Heart right ventricle (tissue), 16 donors: ENCODE measurements at regions of chr12 and their contacts with region 1.

Region 1: DNA sequence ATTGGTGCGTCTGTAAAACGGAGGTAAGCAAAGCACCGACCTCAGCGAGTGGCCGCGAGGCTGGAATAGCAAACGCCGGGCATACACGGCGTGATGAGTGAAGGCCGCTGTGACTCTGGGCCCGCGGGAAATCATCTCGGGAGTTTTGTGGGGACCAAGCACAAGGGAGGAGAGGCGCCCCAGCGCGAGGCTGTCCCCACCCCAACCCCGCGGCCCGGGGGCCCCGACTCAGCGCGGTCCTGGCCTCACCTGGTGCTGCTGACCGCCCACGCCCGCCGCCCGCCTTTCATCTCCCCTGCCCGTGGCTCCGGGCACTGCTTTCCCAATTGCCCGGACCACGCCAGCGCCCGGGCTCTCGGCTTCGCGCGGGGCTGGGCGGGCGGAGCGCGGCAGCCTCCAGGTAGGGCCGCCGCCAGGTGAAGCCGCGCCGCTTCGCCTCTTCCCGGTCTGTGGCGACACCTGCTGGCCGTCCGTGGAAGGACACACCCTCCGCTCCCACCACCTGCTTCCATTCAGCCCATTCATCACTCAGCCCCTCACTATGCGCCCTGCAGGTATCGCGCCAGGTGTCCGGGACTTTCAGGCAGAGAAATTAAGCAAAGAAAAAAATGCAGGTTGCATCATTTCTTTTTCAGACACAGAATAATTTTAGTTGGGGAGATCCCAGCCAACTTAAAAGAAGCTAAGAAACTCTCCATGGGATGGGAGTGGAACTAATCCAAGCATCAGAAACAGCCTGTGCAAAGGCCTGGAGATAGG is 360.4 kb downstream of the MED13L start:
- DNase-seq: peak; percentile 37 to 68
- ATAC-seq: peak; percentile 53 to 81 (median 67)
- H3K4me3 ChIP-seq: peak overlapping the region in 1 of 10 donors; percentile 8
- H3K27ac ChIP-seq: no peak overlapping the region
- H3K4me1 ChIP-seq: peaks cover 0 to 4% (median 3%) of the 10 kb centered on the region in 9 donors
- H3K27me3 ChIP-seq: peaks cover 0 to 62% (median 50%) of the 10 kb centered on the region in 7 donors
- CTCF ChIP-seq: peak; percentile 88 to 98 (median 96)

Region 2: GRCh38 chr12:113980537-113981337 is 1936.4 kb before region 1 on chr12:
- intact Hi-C with region 1: loop called in 5 of 10 experiments (anchors 10 kb)
- DNase-seq: no peak
- ATAC-seq: peak in 6 of 8 donors; percentile 49 to 74 (median 56)
- H3K4me3 ChIP-seq: no peak overlapping the region
- H3K27ac ChIP-seq: no peak overlapping the region
- H3K4me1 ChIP-seq: no peaks in the 10 kb centered on the region
- H3K27me3 ChIP-seq: peaks cover 0 to 66% (median 41%) of the 10 kb centered on the region in 7 donors
- CTCF ChIP-seq: peak; percentile 81 to 95 (median 85)

Region 3: GRCh38 chr12:114625294-114625851 is 1291.7 kb before region 1 on chr12:
- intact Hi-C with region 1: loop called in 1 of 10 experiments (anchors 10 kb)
- DNase-seq: peak in 1 of 2 donors; percentile 19
- ATAC-seq: no peak
- H3K4me3 ChIP-seq: no peak overlapping the region
- H3K27ac ChIP-seq: no peak overlapping the region
- H3K4me1 ChIP-seq: no peaks in the 10 kb centered on the region
- H3K27me3 ChIP-seq: peaks cover 0 to 46% (median 10%) of the 10 kb centered on the region in 7 donors
- CTCF ChIP-seq: peak; percentile 28 to 73 (median 65)

Region 4: DNA sequence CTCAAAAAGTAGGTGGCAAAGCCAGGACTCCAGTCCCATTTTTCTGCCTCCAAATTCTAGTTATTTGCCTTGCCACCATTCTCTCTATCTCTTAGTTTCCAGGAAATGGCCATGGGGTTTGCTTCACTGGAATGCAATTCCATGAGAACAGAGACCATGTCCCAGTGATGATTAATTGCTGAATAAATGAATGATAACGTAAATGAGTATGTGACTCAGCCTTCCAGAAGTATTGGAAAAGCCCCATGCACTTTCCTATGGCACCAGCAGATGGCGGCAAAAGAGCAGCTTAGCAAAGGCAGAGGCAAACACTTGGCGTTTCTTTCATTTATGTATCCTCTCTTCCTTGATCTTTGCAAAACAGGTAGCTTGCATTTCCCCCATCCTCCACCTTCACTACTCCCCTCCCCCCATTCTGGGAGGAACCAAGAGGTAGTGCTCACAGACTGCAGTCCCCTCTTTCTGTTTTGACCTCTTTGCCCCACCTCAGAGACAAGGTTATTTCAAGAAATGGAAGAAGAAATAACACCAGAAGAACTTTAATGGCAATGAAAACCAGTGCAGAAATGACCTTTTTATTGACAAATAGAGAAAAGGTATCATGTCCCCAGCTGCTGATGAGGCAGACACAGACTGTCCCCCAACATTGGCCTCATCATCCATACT is 1254.4 kb before region 1 on chr12:
- intact Hi-C with region 1: loop called (anchors 1 to 2 kb)
- DNase-seq: peak; percentile 72 to 73
- ATAC-seq: peak in 3 of 8 donors; percentile 46 to 50 (median 49)
- H3K4me3 ChIP-seq: no peak overlapping the region
- H3K27ac ChIP-seq: no peak overlapping the region
- H3K4me1 ChIP-seq: peaks cover 0 to 19% (median 13%) of the 10 kb centered on the region in 9 donors
- H3K27me3 ChIP-seq: peaks cover 6 to 78% (median 61%) of the 10 kb centered on the region in 7 donors
- CTCF ChIP-seq: peak in 8 of 9 donors; percentile 87 to 99 (median 96)

Region 5: GRCh38 chr12:115149685-115150378 is 767.3 kb before region 1 on chr12:
- intact Hi-C with region 1: no loop called
- DNase-seq: no peak
- ATAC-seq: no peak
- H3K4me3 ChIP-seq: no peak overlapping the region
- H3K27ac ChIP-seq: no peak overlapping the region
- H3K4me1 ChIP-seq: peaks cover 0 to 10% (median 0%) of the 10 kb centered on the region in 9 donors
- H3K27me3 ChIP-seq: no peaks in the 10 kb centered on the region
- CTCF ChIP-seq: no peak

Region 6: GRCh38 chr12:115763376-115763775 is 153.7 kb before region 1 on chr12:
- intact Hi-C with region 1: loop called in 4 of 10 experiments (anchors 5 to 10 kb)
- DNase-seq: no peak
- ATAC-seq: no peak
- H3K4me3 ChIP-seq: no peak overlapping the region
- H3K27ac ChIP-seq: no peak overlapping the region
- H3K4me1 ChIP-seq: no peaks in the 10 kb centered on the region
- H3K27me3 ChIP-seq: peaks cover 0 to 49% (median 6%) of the 10 kb centered on the region in 7 donors
- CTCF ChIP-seq: no peak

Region 7: GRCh38 chr12:115771065-115771464 is 146.0 kb before region 1 on chr12:
- intact Hi-C with region 1: loop called in 2 of 10 experiments (anchors 10 kb)
- DNase-seq: peak in 1 of 2 donors; percentile 8
- ATAC-seq: peak in 3 of 8 donors; percentile 39 to 57 (median 56)
- H3K4me3 ChIP-seq: no peak overlapping the region
- H3K27ac ChIP-seq: no peak overlapping the region
- H3K4me1 ChIP-seq: no peaks in the 10 kb centered on the region
- H3K27me3 ChIP-seq: peaks cover 0 to 21% (median 0%) of the 10 kb centered on the region in 7 donors
- CTCF ChIP-seq: peak in 6 of 9 donors; percentile 7 to 47 (median 22)

Region 8: GRCh38 chr12:115794659-115795081 is 122.4 kb before region 1 on chr12:
- intact Hi-C with region 1: loop called in 1 of 10 experiments (anchors 10 kb)
- DNase-seq: no peak
- ATAC-seq: no peak
- H3K4me3 ChIP-seq: no peak overlapping the region
- H3K27ac ChIP-seq: no peak overlapping the region
- H3K4me1 ChIP-seq: peaks cover 0 to 12% (median 0%) of the 10 kb centered on the region in 9 donors
- H3K27me3 ChIP-seq: peaks cover 0 to 6% (median 0%) of the 10 kb centered on the region in 7 donors
- CTCF ChIP-seq: no peak